Activated CD4-positive, alpha-beta memory T cell treated with anti-CD3 and anti-CD28 coated beads for 36 hours (primary cell): ENCODE measurements at regions of chr12 and their contacts with region 1.

Region 1: GRCh38 chr12:9707864-9708808 is 24.8 kb downstream of the CLECL1 start:
- DNase-seq: peak; percentile 81
- H3K4me3 Mint-ChIP-seq: peak overlapping the region; percentile 62
- H3K27ac Mint-ChIP-seq: peak overlapping the region; percentile 85
- H3K4me1 Mint-ChIP-seq: peaks cover 40% of the 10 kb centered on the region
- H3K27me3 Mint-ChIP-seq: no peaks in the 10 kb centered on the region

Region 2: DNA sequence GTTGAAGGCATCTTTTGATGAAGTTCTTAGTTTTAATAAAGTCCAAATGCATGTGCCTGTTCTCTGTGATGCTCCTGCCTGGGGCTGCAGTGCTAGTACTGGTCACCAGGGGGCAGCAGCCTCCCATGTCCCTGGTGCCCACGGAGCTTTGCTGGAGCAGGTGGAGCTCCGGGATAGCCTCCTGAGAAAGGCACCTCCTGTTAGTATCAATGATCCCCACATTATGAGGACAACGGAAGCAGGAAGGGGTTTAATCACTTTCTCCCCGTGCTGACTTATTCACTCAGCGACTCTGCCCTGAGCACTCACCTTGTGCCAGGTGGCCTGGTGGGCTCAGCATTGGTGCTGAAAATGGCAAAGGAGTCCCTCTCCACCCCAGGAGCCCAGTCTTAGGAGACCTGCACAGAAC is 376.9 kb before region 1 on chr12:
- CTCF ChIA-PET with region 1: interaction called, 6 read pairs
- POLR2A ChIA-PET with region 1: no interaction called
- intact Hi-C with region 1: loop called (anchors 10 kb)
- DNase-seq: peak; percentile 76
- H3K4me3 Mint-ChIP-seq: no peak overlapping the region
- H3K27ac Mint-ChIP-seq: no peak overlapping the region
- H3K4me1 Mint-ChIP-seq: peaks cover 6% of the 10 kb centered on the region
- H3K27me3 Mint-ChIP-seq: no peaks in the 10 kb centered on the region

Region 3: GRCh38 chr12:9634177-9634803 is 73.8 kb before region 1 on chr12:
- CTCF ChIA-PET with region 1: interaction called, 86 read pairs
- POLR2A ChIA-PET with region 1: interaction called, 3 read pairs
- intact Hi-C with region 1: loop called (anchors 1 kb)
- DNase-seq: peak; percentile 81
- H3K4me3 Mint-ChIP-seq: no peak overlapping the region
- H3K27ac Mint-ChIP-seq: peak overlapping the region; percentile 66
- H3K4me1 Mint-ChIP-seq: peaks cover 60% of the 10 kb centered on the region
- H3K27me3 Mint-ChIP-seq: no peaks in the 10 kb centered on the region

Region 4: DNA sequence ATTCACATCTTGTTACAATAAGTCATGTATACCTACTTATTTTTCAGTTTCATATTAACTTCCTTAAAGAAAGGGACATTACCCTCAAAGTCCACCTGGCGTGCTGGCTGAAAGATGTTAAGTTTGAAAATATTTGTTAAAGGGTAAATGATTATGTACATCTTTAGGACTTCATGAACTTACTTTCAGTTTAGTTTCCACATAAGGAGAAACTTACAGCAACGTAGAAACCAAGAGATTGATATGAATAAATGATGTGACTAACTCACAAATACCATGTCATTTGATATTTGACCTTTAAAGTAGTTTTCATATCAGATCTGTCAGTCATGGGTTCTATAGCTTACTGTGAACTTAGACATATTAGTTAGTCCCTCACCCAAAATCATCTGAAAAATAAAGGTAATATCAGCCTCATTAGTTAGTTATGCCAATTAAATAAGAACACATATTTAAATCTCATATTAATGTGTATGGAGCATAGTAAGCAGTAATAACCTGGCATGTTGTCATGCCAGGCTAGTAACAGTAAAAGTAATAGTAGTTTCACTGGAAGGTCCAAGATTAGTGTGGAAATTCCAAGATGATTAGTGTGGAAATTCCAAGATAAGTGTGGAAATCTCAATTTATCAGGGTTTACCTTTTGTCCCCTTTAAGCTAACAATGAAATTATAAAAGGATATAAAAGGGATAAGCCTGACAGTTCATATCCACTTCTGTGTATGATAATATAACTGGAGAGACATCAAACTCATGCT is 40.6 kb before region 1 on chr12:
- CTCF ChIA-PET with region 1: interaction called, 16 read pairs
- POLR2A ChIA-PET with region 1: interaction called, 8 read pairs
- intact Hi-C with region 1: loop called (anchors 2 kb)
- DNase-seq: no peak
- H3K4me3 Mint-ChIP-seq: peak overlapping the region; percentile 93
- H3K27ac Mint-ChIP-seq: peak overlapping the region; percentile 98
- H3K4me1 Mint-ChIP-seq: peaks cover 56% of the 10 kb centered on the region
- H3K27me3 Mint-ChIP-seq: no peaks in the 10 kb centered on the region

Region 5: DNA sequence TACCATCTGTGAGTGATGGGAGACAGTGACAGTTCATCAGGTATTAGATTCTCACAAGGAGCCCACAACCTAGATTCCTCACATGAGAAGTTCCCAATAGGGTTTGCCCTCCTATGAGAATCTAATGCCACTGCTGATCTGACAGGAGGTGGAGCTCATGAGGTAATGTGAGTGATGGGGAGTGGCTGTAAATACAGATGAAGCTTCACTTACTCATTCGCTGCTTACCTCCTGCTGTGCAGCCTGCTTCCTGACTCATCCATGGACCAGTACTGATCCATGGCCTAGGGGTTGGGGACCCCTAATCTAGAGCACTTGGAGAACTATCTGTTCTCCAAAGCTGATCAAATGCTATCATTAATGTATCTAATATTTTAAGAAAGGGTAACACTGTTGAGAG is 20.9 kb before region 1 on chr12:
- CTCF ChIA-PET with region 1: interaction called, 18 read pairs
- POLR2A ChIA-PET with region 1: interaction called, 3 read pairs
- intact Hi-C with region 1: no loop called
- DNase-seq: peak; percentile 44
- H3K4me3 Mint-ChIP-seq: no peak overlapping the region
- H3K27ac Mint-ChIP-seq: peak overlapping the region; percentile 51
- H3K4me1 Mint-ChIP-seq: peaks cover 66% of the 10 kb centered on the region
- H3K27me3 Mint-ChIP-seq: no peaks in the 10 kb centered on the region

Region 6: GRCh38 chr12:9721394-9722092 is 13.4 kb after region 1 on chr12:
- CTCF ChIA-PET with region 1: interaction called, 32 read pairs
- POLR2A ChIA-PET with region 1: interaction called, 4 read pairs
- intact Hi-C with region 1: no loop called
- DNase-seq: no peak
- H3K4me3 Mint-ChIP-seq: no peak overlapping the region
- H3K27ac Mint-ChIP-seq: no peak overlapping the region
- H3K4me1 Mint-ChIP-seq: peaks cover 26% of the 10 kb centered on the region
- H3K27me3 Mint-ChIP-seq: no peaks in the 10 kb centered on the region